Cardiac septum (tissue), 1 donor: ENCODE measurements at regions of chr7 and their contacts with region 1.

Region 1: GRCh38 chr7:158782761-158783401 is 46.4 kb downstream of the ESYT2 start:
- DNase-seq: peak; percentile 89

Region 2: DNA sequence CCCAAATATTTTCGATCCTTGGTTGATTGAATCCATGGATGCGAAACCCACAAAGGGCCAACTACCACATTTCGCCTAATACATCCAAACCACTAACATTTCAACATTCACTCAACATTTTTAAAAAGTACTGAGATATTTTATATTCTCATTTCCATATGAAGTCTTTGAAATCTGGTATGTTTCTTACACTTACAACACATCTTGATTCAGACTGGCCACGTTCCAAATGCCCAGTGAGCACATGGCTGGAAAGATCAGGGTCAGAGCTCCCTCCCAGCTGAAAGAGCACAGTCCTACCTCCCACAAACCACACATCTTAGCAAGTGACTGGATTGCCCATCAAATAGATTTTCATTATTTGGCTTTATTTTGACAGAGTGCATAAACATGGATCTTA is 97.2 kb before region 1 on chr7:
- intact Hi-C with region 1: no loop called
- DNase-seq: no peak

Region 3: DNA sequence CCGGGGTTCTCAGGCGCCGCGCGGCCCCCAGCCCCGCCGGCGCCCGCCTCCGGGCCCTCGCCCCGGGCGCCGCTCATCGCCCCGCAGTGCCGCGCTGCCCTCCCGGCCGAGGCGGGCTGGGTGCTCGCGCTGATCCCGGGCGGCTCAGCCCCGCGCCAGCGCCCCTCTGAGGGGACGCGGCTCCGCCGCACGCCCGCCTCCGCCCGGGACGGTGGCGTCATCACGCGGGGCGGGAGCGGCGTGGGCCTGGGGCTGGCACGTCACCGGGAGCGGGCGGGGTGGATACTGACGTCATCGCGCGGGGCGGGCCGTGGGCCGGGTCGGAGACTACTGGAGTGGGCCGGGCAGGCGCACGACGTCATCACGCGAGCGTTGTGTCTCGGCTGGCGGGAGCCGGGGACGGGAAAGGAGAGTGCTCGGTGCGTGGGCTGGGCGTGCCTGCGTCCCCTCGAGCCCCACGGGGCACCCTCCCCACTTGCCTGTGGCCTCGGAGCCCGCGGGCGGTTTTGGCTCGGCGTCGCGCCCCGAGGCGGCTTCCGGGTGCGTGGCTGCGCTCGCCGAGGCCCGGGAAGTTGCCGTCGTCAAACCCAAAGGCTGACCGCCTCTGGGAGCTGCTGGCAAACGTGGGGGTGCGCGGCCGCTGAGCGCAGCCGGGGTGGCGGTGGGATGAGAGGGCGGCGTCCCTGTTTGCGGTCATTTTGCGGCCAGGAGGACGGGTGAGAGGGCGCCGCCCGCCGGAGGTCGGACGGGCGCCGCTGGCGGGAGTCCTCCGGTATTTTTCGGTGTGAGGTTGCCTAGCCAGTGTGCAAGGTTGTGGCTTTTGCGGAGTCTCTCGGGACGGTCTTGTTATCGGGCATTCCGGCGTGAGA is 46.7 kb after region 1 on chr7 and contains the start of gene ESYT2:
- intact Hi-C with region 1: loop called (anchors 1 kb)
- DNase-seq: peak; percentile 100
- total RNA-seq, gene ESYT2: 45.6 TPM

Region 4: GRCh38 chr7:158863611-158864506 is 81.0 kb after region 1 on chr7:
- intact Hi-C with region 1: loop called (anchors 5 kb)
- DNase-seq: peak; percentile 90

Region 5: DNA sequence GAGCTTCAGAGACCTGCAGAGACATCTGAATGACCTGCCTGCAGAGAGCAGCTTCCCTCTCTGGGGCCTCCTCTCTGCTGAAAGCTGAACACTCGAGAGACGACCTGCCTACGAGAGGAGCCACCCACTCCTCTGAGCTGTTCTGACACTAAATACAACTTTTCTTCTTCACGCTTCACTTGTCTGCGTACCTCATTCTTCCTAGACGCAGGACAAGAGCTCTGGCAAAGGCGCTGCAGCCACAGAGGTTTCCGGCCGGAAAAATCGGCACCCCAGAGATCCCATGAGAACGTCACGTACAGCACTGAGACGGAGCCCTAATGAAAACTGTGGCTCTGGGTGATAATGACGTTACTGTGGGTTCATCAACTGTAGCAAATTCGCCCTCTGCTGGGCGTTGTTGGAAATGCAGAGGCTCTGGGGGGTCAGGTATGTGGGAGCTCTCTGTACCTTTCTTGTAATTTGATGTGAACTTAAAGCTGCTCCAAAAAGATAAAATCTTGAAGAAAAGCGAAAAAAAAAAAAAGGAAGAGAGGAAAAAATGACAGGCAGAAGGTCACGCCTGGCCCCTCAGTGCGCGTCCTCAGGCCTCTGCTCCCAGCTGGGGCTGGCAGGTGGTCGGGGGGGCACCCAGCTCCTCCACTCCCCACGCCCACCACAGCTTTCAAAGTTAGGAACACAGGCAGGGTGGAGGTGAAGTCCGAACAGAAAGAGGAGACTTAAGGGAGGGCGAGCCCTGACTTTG is 194.1 kb after region 1 on chr7:
- intact Hi-C with region 1: loop called (anchors 2 kb)
- DNase-seq: peak; percentile 88